ENCODE measurements at regions of chr20 and their contacts with region 1.

Region 1: GRCh38 chr20:46022411-46023147 is 6.4 kb upstream of the SLC12A5 start:
- DNase-seq: peak; percentile 67
- H3K4me3 ChIP-seq: peak overlapping the region in 1 of 4 donors; percentile 55
- H3K27ac ChIP-seq: no peak overlapping the region
- H3K4me1 ChIP-seq: peaks cover 0 to 18% (median 16%) of the 10 kb centered on the region in 4 donors
- H3K27me3 ChIP-seq: peaks cover 92% of the 10 kb centered on the region
- CTCF ChIP-seq: peak; percentile 77 to 85 (median 81)
- EP300 ChIP-seq: no peak
- POLR2A ChIP-seq: no peak

Region 2: GRCh38 chr20:45910670-45911485 is 111.7 kb before region 1 on chr20:
- in situ Hi-C with region 1: no loop called
- intact Hi-C with region 1: no loop called
- DNase-seq: peak; percentile 97
- H3K4me3 ChIP-seq: peak overlapping the region; percentile 30 to 61 (median 44)
- H3K27ac ChIP-seq: peak overlapping the region; percentile 82 to 95 (median 89)
- H3K4me1 ChIP-seq: peaks cover 8 to 44% (median 16%) of the 10 kb centered on the region in 4 donors
- H3K27me3 ChIP-seq: no peaks in the 10 kb centered on the region
- CTCF ChIP-seq: no peak
- EP300 ChIP-seq: no peak
- POLR2A ChIP-seq: peak; percentile 63

Region 3: DNA sequence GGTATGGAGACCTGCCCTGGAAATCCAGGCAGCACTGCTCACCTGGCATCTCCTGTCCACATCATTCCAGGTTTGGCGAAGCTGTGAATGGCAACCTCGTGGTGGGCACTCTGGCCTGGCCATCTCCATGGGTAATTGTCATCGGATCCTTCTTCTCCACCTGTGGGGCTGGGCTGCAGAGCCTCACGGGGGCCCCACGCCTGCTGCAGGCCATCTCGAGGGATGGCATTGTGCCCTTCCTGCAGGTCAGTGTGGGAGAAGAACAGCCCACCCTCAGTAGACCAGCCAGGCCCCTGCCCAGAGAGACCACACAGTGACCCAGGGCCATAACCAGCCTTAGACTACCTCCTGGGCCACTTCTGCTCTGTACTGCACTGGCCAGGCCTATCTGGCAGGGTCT is 22.3 kb after region 1 on chr20:
- in situ Hi-C with region 1: no loop called
- intact Hi-C with region 1: loop called (anchors 1 kb)
- DNase-seq: no peak
- H3K4me3 ChIP-seq: no peak overlapping the region
- H3K27ac ChIP-seq: no peak overlapping the region
- H3K4me1 ChIP-seq: no peaks in the 10 kb centered on the region
- H3K27me3 ChIP-seq: peaks cover 26% of the 10 kb centered on the region
- CTCF ChIP-seq: no peak
- EP300 ChIP-seq: no peak
- POLR2A ChIP-seq: no peak

Region 4: DNA sequence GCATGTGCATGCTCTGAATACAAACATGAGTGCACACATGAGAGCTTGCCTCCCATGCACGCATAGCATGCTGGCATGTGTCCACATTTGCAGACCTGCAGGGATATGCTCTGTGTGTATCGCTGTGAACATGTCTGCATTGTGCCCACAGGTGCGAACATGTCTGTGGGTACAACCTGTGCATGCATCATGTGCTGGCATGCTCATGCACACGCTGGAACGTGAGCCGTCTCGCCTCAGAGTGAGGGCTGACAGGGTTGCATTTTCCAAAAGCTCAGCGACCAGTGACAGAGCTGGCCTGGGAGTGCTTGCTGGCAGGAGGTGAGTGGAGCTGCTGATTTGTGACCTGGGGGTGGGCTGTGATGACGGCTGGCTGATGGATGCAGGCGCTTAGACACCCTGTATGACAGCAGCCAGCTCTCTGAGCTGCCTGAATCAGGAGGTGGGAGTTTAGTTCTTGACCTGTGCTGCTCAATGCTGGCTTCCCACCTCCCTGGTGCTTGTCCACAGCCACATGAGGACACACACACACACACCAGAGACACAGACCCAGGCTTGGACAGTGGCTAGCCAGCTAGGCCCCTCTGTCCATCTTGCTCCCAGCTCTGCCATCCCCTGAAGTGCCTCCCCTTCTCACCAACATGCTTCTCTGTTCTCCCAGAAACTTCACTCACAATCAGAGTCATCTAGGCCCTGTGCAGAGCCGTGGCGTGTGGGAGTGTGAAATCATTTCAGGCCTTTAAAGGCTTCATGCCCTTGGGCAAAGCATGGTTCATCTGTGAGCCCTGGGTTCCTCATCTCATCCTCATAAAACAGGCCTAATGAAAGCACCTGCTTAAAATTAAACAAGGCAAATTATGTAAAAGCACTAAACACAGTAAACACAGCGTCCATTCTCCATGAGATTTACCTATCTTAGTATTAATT is 146.9 kb after region 1 on chr20:
- in situ Hi-C with region 1: loop called in 2 of 4 experiments (anchors 10 kb)
- intact Hi-C with region 1: loop called (anchors 5 kb)
- DNase-seq: no peak
- H3K4me3 ChIP-seq: no peak overlapping the region
- H3K27ac ChIP-seq: no peak overlapping the region
- H3K4me1 ChIP-seq: no peaks in the 10 kb centered on the region
- H3K27me3 ChIP-seq: peaks cover 51% of the 10 kb centered on the region
- CTCF ChIP-seq: no peak
- EP300 ChIP-seq: no peak
- POLR2A ChIP-seq: no peak

Region 5: DNA sequence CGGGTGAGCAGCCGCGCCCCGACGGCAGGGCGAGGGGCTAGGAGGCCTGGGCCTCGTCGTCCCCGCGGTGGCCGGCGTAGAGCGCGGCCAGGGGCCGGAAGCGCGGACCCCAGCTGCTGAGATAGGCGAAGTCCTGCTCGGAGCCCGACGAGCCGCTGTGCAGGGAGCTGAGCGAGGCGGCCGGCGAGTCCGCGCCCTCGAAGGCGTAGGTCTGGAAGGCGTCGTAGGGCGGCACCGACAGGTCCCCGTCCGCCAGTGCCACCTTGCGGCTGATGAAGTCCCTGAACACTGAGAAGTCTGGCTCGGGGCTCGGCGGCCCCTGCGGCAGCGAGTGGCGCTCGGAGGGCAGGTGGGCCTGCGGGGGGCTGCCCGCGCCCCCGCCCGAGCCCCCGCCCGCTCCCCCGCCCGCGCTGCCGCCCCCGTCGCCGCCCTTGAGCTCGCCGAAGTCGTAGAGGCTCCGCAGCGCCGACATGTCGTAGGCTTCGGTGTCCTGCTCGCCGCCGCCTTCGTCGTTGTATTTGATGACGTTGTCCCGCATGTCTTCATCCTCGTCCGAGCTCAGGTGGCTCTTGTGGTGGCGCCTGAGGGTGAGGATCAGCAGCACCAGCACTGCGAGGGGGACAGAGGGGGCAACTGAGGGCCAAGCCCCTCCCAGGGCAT is 152.0 kb after region 1 on chr20:
- in situ Hi-C with region 1: loop called in 3 of 4 experiments (anchors 5 to 10 kb)
- intact Hi-C with region 1: loop called (anchors 5 kb)
- DNase-seq: peak; percentile 74
- H3K4me3 ChIP-seq: no peak overlapping the region
- H3K27ac ChIP-seq: no peak overlapping the region
- H3K4me1 ChIP-seq: no peaks in the 10 kb centered on the region
- H3K27me3 ChIP-seq: peaks cover 58% of the 10 kb centered on the region
- CTCF ChIP-seq: peak; percentile 29 to 60 (median 53)
- EP300 ChIP-seq: no peak
- POLR2A ChIP-seq: no peak

Region 6: DNA sequence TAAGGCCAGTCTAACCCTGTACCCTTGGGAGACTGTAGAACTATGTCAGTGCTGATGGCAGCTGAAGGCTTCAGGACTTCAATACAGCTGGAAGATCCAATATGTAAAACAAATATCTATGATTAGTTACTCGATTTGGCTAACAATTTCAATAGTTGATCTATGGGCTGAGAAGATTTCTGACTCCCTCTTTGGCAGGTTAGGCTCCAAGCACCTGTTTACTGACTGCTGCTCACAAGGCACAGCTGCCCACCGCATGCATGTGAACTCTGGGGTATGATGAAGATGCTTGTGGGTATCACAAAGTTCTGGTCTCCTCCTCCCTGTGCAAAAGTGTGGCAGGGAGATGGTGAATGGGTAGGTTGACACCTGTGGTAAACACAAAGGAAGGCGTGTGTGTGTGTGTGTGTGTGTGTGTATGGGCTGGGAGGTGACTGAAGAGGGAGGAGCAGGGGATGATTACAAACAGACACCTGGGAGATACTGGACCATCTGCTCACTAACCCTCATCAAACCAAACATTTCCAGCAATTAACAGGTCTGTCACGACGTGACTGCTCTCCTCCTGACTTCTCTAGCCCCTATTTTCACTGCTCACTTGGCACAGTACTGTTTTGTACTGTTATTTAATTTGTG is 365.7 kb after region 1 on chr20:
- in situ Hi-C with region 1: no loop called
- intact Hi-C with region 1: no loop called
- DNase-seq: no peak
- H3K4me3 ChIP-seq: no peak overlapping the region
- H3K27ac ChIP-seq: no peak overlapping the region
- H3K4me1 ChIP-seq: no peaks in the 10 kb centered on the region
- H3K27me3 ChIP-seq: no peaks in the 10 kb centered on the region
- CTCF ChIP-seq: no peak
- EP300 ChIP-seq: no peak
- POLR2A ChIP-seq: no peak

Measured in transverse colon (tissue), 4 donors.